Heart left ventricle (tissue), 16 donors: ENCODE measurements at regions of chr12 and their contacts with region 1.

Region 1: DNA sequence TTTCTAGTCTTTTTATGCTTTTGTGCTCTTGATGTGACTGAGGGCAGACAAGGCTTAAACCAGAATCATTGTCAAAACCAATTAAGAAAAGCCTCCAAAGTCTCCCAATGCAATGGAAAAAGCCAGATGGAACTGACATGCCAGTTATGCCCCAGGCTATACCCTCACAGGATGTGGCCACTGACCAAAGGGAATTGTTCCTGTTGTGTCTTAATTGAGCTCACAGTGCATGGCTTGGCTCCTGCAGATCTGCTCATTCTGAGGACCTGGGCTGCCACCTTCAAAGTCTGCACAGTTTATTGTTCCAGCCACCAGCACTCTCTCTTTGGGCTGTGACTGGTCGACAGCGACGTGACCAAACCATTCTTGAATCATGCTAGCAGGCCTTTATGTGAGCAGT is 17.1 kb upstream of the BICD1 start:
- DNase-seq: no peak
- ATAC-seq: no peak
- H3K4me3 ChIP-seq: no peak overlapping the region
- H3K27ac ChIP-seq: no peak overlapping the region
- H3K4me1 ChIP-seq: no peaks in the 10 kb centered on the region
- H3K27me3 ChIP-seq: no peaks in the 10 kb centered on the region
- CTCF ChIP-seq: no peak
- POLR2A ChIP-seq: no peak

Region 2: GRCh38 chr12:32034045-32034444 is 55.5 kb before region 1 on chr12:
- intact Hi-C with region 1: loop called in 1 of 10 experiments (anchors 2 kb)
- DNase-seq: no peak
- ATAC-seq: no peak
- H3K4me3 ChIP-seq: no peak overlapping the region
- H3K27ac ChIP-seq: no peak overlapping the region
- H3K4me1 ChIP-seq: no peaks in the 10 kb centered on the region
- H3K27me3 ChIP-seq: no peaks in the 10 kb centered on the region
- CTCF ChIP-seq: no peak
- POLR2A ChIP-seq: no peak

Region 3: GRCh38 chr12:32558903-32559302 is 469.3 kb after region 1 on chr12:
- intact Hi-C with region 1: no loop called
- DNase-seq: no peak
- ATAC-seq: peak in 3 of 4 donors; percentile 23 to 36 (median 33)
- H3K4me3 ChIP-seq: peak overlapping the region in 7 of 12 donors; percentile 3 to 19 (median 9)
- H3K27ac ChIP-seq: peak overlapping the region in 11 of 12 donors; percentile 2 to 79 (median 46)
- H3K4me1 ChIP-seq: peaks cover 5 to 64% (median 46%) of the 10 kb centered on the region in 12 donors
- H3K27me3 ChIP-seq: no peaks in the 10 kb centered on the region
- CTCF ChIP-seq: no peak
- POLR2A ChIP-seq: no peak

Region 4: DNA sequence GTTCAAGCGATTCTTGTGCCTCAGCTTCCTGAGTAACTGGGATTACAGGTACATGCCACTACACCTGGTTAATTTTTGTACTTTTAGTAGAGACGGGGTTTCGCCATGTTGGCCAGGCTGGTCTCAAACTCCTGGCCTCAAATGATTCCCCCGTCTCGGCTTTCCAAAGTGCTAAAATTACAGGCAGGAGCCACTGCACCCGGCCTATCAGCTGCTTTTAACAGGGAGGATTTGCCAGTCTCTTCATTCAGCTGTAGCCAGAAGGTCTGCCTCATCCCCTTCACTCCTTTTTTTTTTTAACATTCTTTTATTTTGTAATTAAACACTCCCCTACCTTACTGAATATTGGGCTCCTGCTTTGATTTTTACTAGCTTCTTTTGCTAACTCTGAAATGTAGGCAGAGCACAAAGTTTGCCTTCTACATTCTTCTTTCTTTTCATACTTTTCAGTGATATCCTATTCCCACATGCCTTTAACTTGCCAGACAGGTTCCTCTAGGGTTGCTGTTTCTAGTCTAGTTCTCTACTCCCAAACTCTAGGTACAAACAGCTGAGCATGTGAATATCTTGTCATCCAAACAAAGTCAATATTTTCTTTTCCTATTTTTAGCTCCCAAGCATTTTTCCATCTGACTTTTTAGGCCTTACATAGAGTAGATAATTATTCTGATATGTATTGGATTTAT is 515.6 kb after region 1 on chr12:
- intact Hi-C with region 1: no loop called
- DNase-seq: no peak
- ATAC-seq: no peak
- H3K4me3 ChIP-seq: no peak overlapping the region
- H3K27ac ChIP-seq: no peak overlapping the region
- H3K4me1 ChIP-seq: peaks cover 0 to 25% (median 5%) of the 10 kb centered on the region in 12 donors
- H3K27me3 ChIP-seq: no peaks in the 10 kb centered on the region
- CTCF ChIP-seq: no peak
- POLR2A ChIP-seq: no peak